ENCODE measurements at regions of chr2 and their contacts with region 1.

Region 1: DNA sequence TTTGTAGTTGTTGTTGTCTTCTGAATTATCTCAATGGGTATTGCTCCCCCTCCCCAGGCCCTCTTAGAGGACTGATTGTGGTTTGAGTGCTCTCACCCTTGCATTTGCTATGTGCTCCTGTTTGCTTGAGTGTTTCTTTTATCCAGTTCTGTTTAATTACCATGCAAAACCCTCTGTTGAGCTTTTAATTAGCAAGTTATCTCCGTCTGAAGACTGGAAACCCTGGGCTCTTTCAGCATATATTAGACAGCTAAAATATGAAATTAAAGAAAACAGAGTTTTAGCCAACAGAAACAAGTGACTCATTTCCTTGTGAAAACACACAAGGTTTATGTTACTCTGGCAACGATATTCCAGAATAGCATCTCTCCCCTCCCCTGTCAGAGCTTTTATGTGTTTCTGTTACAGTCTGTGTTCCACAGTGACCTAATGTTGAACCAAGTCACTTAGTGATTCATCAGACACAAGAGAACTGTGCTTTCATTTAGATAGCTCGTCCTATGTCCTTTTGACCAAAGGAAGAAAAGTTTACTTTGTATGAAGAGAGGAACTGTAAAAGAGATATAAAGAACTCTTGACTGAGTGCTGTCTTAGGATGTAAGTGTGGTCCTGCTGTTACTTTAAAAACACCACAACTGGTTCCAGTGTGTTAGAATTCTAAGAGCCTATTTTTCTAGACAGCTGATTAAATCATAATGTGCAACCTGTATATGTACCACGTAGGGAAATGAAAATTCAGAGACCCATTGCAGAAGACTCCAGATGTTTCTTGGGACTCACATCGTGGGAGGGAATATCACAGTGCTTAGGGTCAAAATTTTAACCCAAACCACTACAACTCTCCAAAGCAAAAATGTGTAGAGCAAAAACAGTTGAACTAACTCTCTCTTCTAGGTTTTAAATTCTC is 172.8 kb upstream of the RBMS1 start:
- DNase-seq: no peak
- H3K4me3 ChIP-seq: peak overlapping the region in 3 of 4 donors; percentile 8 to 22 (median 19)
- H3K27ac ChIP-seq: peak overlapping the region; percentile 72 to 88 (median 82)
- H3K4me1 ChIP-seq: peaks cover 0 to 23% (median 19%) of the 10 kb centered on the region in 4 donors
- H3K27me3 ChIP-seq: no peaks in the 10 kb centered on the region
- CTCF ChIP-seq: no peak
- EP300 ChIP-seq: peak; percentile 9 to 93 (median 76)
- POLR2A ChIP-seq: no peak

Region 2: GRCh38 chr2:160920791-160921303 is 254.4 kb after region 1 on chr2:
- intact Hi-C with region 1: loop called (anchors 10 kb)
- DNase-seq: peak; percentile 64
- H3K4me3 ChIP-seq: no peak overlapping the region
- H3K27ac ChIP-seq: peak overlapping the region; percentile 60 to 77 (median 70)
- H3K4me1 ChIP-seq: peaks cover 0 to 23% (median 21%) of the 10 kb centered on the region in 4 donors
- H3K27me3 ChIP-seq: no peaks in the 10 kb centered on the region
- CTCF ChIP-seq: no peak
- EP300 ChIP-seq: no peak
- POLR2A ChIP-seq: no peak